GM10248 (cell line): ENCODE measurements at regions of chr6 and their contacts with region 1.

Region 1: GRCh38 chr6:2848851-2849250 is 7.2 kb upstream of the SERPINB1 start:
- DNase-seq: no peak
- CTCF ChIP-seq: no peak

Region 2: GRCh38 chr6:2542858-2543218 is 306.0 kb before region 1 on chr6:
- CTCF ChIA-PET with region 1: no interaction called
- POLR2A ChIA-PET with region 1: no interaction called
- DNase-seq: peak; percentile 28
- CTCF ChIP-seq: no peak

Region 3: GRCh38 chr6:2834262-2834661 is 14.6 kb before region 1 on chr6:
- CTCF ChIA-PET with region 1: interaction called, 10 read pairs
- POLR2A ChIA-PET with region 1: no interaction called
- DNase-seq: no peak
- CTCF ChIP-seq: no peak

Region 4: GRCh38 chr6:2870056-2870674 is 21.3 kb after region 1 on chr6:
- CTCF ChIA-PET with region 1: interaction called, 14 read pairs
- POLR2A ChIA-PET with region 1: no interaction called
- DNase-seq: no peak
- CTCF ChIP-seq: no peak

Region 5: GRCh38 chr6:2911171-2911570 is 62.3 kb after region 1 on chr6:
- CTCF ChIA-PET with region 1: interaction called, 59 read pairs
- POLR2A ChIA-PET with region 1: no interaction called
- DNase-seq: no peak
- CTCF ChIP-seq: no peak

Region 6: GRCh38 chr6:2988426-2989331 is 139.8 kb after region 1 on chr6:
- CTCF ChIA-PET with region 1: interaction called, 44 read pairs
- POLR2A ChIA-PET with region 1: no interaction called
- DNase-seq: peak; percentile 75
- CTCF ChIP-seq: peak; percentile 74

Region 7: GRCh38 chr6:3239110-3239830 is 390.4 kb after region 1 on chr6:
- CTCF ChIA-PET with region 1: no interaction called
- POLR2A ChIA-PET with region 1: no interaction called
- DNase-seq: no peak
- CTCF ChIP-seq: no peak